Heart left ventricle (tissue), 16 donors: ENCODE measurements at regions of chr12 and their contacts with region 1.

Region 1: GRCh38 chr12:21773263-21773741 is 1.2 kb downstream of the KCNJ8 start:
- DNase-seq: peak; percentile 61 to 81 (median 79)
- ATAC-seq: peak; percentile 31 to 45 (median 42)
- H3K4me3 ChIP-seq: peak overlapping the region; percentile 38 to 79 (median 68)
- H3K27ac ChIP-seq: peak overlapping the region; percentile 84 to 96 (median 92)
- H3K4me1 ChIP-seq: peaks cover 0 to 39% (median 3%) of the 10 kb centered on the region in 12 donors
- H3K27me3 ChIP-seq: peaks cover 0 to 29% (median 0%) of the 10 kb centered on the region in 9 donors
- CTCF ChIP-seq: peak in 11 of 12 donors; percentile 15 to 61 (median 44)
- POLR2A ChIP-seq: peak in 1 of 2 donors; percentile 26

Region 2: DNA sequence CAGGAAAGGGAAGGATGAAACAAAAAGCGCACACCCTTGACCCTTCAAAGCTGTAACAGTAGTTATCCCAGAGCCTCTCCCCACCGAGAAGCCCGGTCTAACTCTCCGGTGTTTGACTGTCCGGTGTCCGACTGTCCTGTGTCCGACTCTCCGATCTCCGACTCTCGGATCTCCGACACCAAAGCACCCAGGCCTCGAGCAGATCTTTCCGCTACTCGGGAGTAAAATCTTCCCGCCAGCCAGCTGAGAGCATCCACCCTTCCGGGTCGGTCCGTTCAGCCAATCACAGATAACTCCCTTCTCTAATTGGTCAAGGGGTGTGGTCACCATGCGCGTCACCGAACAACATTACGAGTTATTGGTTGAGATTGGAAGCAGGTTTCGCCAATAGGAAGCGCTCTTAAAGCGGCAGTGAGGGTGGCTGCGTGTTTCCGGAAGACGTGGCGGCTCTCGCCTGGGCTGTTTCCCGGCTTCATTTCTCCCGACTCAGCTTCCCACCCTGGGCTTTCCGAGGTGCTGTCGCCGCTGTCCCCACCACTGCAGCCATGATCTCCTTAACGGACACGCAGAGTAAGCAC is 271.8 kb before region 1 on chr12 and contains the starts of genes GOLT1B and RECQL:
- intact Hi-C with region 1: no loop called
- DNase-seq: peak; percentile 88 to 95 (median 93)
- ATAC-seq: peak; percentile 99 to 100 (median 99)
- H3K4me3 ChIP-seq: peak within 1 kb of the TSS; percentile 77 to 97 (median 90)
- H3K27ac ChIP-seq: peak within 1 kb of the TSS; percentile 39 to 91 (median 88)
- H3K4me1 ChIP-seq: peaks cover 8 to 57% (median 44%) of the 10 kb centered on the region in 12 donors
- H3K27me3 ChIP-seq: no peaks in the 10 kb centered on the region
- CTCF ChIP-seq: no peak
- POLR2A ChIP-seq: peak in 1 of 2 donors; percentile 72
- total RNA-seq, gene GOLT1B: 12.9 to 32.0 (median 22.1) TPM
- total RNA-seq, gene RECQL: 17.1 to 39.3 (median 27.4) TPM

Region 3: GRCh38 chr12:21697904-21698630 is 75.2 kb before region 1 on chr12:
- intact Hi-C with region 1: loop called in 1 of 10 experiments (anchors 10 kb)
- DNase-seq: no peak
- ATAC-seq: peak in 2 of 4 donors; percentile 18 to 47
- H3K4me3 ChIP-seq: peak overlapping the region in 9 of 12 donors; percentile 9 to 41 (median 29)
- H3K27ac ChIP-seq: peak overlapping the region in 3 of 12 donors; percentile 6 to 28 (median 25)
- H3K4me1 ChIP-seq: peaks cover 0 to 4% (median 0%) of the 10 kb centered on the region in 12 donors
- H3K27me3 ChIP-seq: no peaks in the 10 kb centered on the region
- CTCF ChIP-seq: peak; percentile 64 to 86 (median 74)
- POLR2A ChIP-seq: no peak

Region 4: GRCh38 chr12:21813125-21813524 is 39.8 kb after region 1 on chr12:
- intact Hi-C with region 1: loop called in 4 of 10 experiments (anchors 2 to 5 kb)
- DNase-seq: no peak
- ATAC-seq: no peak
- H3K4me3 ChIP-seq: no peak overlapping the region
- H3K27ac ChIP-seq: peak overlapping the region in 6 of 12 donors; percentile 13 to 67 (median 43)
- H3K4me1 ChIP-seq: peaks cover 0 to 20% (median 2%) of the 10 kb centered on the region in 12 donors
- H3K27me3 ChIP-seq: no peaks in the 10 kb centered on the region
- CTCF ChIP-seq: no peak
- POLR2A ChIP-seq: no peak

Region 5: GRCh38 chr12:21818627-21819026 is 45.3 kb after region 1 on chr12:
- intact Hi-C with region 1: loop called in 6 of 10 experiments (anchors 2 to 10 kb)
- DNase-seq: no peak
- ATAC-seq: peak in 3 of 4 donors; percentile 27 to 55 (median 47)
- H3K4me3 ChIP-seq: no peak overlapping the region
- H3K27ac ChIP-seq: peak overlapping the region in 11 of 12 donors; percentile 22 to 60 (median 44)
- H3K4me1 ChIP-seq: peaks cover 0 to 40% (median 13%) of the 10 kb centered on the region in 12 donors
- H3K27me3 ChIP-seq: no peaks in the 10 kb centered on the region
- CTCF ChIP-seq: no peak
- POLR2A ChIP-seq: no peak

Region 6: DNA sequence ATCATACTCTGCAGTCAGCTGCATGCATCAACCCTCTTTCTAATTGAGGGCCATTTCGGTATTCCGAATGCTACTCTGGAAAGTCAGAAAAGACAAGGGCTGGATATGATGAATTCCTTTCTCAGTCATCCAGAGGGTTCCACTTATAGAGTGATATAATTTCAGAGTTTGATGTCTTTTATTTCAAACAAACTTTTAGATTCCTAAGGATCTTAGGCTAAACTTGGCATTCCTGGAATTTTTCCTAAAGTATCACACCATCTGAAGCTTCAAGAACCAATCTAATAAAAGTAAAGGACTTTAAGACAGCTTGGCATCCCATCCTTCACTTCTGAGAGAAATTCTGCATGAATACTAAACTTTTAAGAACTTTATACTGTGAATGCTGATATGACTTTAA is 70.5 kb after region 1 on chr12:
- intact Hi-C with region 1: loop called in 1 of 10 experiments (anchors 5 kb)
- DNase-seq: no peak
- ATAC-seq: no peak
- H3K4me3 ChIP-seq: no peak overlapping the region
- H3K27ac ChIP-seq: no peak overlapping the region
- H3K4me1 ChIP-seq: no peaks in the 10 kb centered on the region
- H3K27me3 ChIP-seq: no peaks in the 10 kb centered on the region
- CTCF ChIP-seq: no peak
- POLR2A ChIP-seq: no peak

Region 7: DNA sequence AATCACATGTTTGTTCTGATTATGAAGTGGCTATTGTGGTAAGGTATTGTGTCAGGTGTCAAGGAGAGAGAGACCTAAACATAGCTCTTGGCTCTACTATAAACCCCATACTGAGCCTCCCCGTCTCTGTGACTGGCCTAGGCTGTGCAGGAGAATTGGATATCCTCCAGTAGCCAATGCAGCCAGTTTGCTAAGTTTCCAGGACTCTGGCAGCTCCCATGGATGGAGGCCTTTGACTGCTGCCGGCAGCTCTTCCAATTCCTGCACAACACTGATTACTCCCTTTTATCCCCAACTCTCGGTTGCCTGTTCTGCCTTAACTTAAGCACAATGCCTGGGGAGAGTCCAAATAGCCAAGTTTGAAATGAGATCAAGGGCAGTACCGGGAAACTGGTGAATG is 108.7 kb after region 1 on chr12:
- intact Hi-C with region 1: loop called in 4 of 10 experiments (anchors 5 to 10 kb)
- DNase-seq: peak in 4 of 5 donors; percentile 55 to 73 (median 66)
- ATAC-seq: peak; percentile 90 to 96 (median 92)
- H3K4me3 ChIP-seq: peak overlapping the region in 1 of 12 donors; percentile 13
- H3K27ac ChIP-seq: peak overlapping the region; percentile 33 to 88 (median 78)
- H3K4me1 ChIP-seq: peaks cover 0 to 70% (median 18%) of the 10 kb centered on the region in 12 donors
- H3K27me3 ChIP-seq: no peaks in the 10 kb centered on the region
- CTCF ChIP-seq: no peak
- POLR2A ChIP-seq: no peak

Region 8: DNA sequence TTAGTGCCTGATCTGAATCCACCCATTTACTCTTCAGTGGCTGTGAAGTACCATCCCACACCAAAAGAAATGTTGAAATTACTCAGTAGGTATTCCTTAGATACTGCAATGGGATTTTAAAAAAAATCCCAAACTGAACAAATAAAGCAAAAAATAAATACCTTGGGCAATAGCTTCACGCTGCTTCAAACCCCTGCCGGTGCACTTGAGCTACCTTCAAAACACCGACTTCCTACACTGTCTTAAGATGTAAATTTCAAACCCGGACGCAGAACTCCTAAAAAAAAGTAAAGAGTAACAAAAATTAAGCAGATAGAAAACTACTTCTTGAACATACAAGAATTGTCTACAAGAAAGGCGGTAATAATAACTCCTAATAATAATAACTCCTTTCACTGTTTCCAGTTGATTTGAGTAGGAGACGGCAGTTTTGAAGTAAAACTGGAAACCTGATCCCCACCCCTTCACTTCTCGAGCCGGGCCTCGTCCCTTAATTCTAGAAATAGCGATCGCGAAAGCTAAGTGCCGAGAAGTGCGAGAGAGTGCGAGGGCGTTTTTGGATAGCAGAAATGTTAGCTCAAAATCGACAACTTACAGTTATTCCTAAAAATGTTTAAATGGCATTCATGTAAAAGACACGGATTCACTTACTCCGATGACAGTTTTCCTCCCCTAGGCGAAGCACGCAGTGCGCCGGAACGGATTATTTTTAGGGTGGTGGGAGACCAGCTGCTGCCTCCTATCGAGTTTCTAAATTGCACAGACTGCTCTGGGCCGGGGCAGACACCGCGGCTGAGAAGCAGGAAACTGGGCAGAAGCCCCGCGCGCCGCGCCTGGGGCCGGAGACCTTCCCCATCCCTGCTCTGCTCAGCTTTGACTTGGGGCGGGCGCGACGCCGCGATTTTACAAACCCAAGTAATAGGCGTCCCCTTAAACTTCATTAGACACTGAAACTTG is 167.5 kb after region 1 on chr12 and contains the start of gene ABCC9:
- intact Hi-C with region 1: loop called in 9 of 10 experiments (anchors 1 to 10 kb)
- DNase-seq: peak; percentile 58 to 79 (median 74)
- ATAC-seq: peak; percentile 74 to 83 (median 77)
- H3K4me3 ChIP-seq: peak within 1 kb of the TSS; percentile 45 to 66 (median 56)
- H3K27ac ChIP-seq: peak within 1 kb of the TSS; percentile 84 to 95 (median 90)
- H3K4me1 ChIP-seq: peaks cover 0 to 18% (median 0%) of the 10 kb centered on the region in 12 donors
- H3K27me3 ChIP-seq: peaks cover 0 to 43% (median 0%) of the 10 kb centered on the region in 9 donors
- CTCF ChIP-seq: peak in 4 of 12 donors; percentile 10 to 29 (median 13)
- POLR2A ChIP-seq: peak in 1 of 2 donors; percentile 54
- total RNA-seq, gene ABCC9: 60.1 to 103 (median 80.0) TPM